ENCODE measurements at regions of chr15 and their contacts with region 1.

Region 1: DNA sequence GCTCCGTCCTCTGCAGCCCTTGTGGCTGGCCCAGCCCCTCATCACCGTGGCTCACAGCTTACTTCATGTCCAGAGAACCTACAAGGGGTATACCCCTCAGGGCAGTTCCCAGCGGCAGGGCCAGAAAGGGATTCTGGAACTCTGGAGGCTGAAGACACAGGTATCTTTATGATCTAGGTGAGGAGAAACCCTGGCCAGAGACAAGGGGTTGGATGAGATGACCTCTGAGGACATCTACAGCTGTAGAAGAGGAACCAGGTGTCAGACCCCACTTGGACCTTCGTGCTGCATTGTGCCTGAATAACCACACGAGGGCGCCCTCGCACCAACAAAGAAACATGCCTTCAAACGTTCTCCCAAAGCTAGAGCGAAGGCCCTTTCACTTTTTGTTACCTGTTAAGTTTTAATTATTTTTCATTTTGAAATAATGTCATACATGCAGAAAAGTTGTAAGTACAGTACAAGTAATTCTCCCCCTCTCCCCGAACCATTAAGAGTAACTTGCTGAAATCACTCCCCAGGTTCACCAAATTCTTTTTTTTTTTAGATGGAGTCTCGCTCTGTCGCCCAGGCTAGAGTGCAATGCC is 118.7 kb upstream of the SMAD3 start:
- DNase-seq: peak; percentile 70
- ATAC-seq: peak; percentile 79
- H3K4me3 ChIP-seq: no peak overlapping the region
- H3K27ac ChIP-seq: no peak overlapping the region
- H3K4me1 ChIP-seq: no peaks in the 10 kb centered on the region; the same call in none of the 2 replicates
- H3K27me3 ChIP-seq: no peaks in the 10 kb centered on the region
- CTCF ChIP-seq: peak; percentile 93
- POLR2A ChIP-seq: peak; percentile 48; the same call in 1 of the 2 replicates
- RAD21 ChIP-seq: peak; percentile 98

Region 2: GRCh38 chr15:66883322-66883911 is 63.3 kb before region 1 on chr15:
- CTCF ChIA-PET with region 1: no interaction called
- POLR2A ChIA-PET with region 1: no interaction called
- dilution Hi-C with region 1: no loop called
- in situ Hi-C with region 1: no loop called
- intact Hi-C with region 1: no loop called
- DNase-seq: peak; percentile 100
- ATAC-seq: peak; percentile 85
- H3K4me3 ChIP-seq: no peak overlapping the region
- H3K27ac ChIP-seq: peak overlapping the region; percentile 54
- H3K4me1 ChIP-seq: peaks cover 20% of the 10 kb centered on the region
- H3K27me3 ChIP-seq: no peaks in the 10 kb centered on the region
- CTCF ChIP-seq: 0 out of 2 replicates have a peak, but pooled peaks have one; percentile 0
- POLR2A ChIP-seq: no peak
- RAD21 ChIP-seq: no peak

Region 3: DNA sequence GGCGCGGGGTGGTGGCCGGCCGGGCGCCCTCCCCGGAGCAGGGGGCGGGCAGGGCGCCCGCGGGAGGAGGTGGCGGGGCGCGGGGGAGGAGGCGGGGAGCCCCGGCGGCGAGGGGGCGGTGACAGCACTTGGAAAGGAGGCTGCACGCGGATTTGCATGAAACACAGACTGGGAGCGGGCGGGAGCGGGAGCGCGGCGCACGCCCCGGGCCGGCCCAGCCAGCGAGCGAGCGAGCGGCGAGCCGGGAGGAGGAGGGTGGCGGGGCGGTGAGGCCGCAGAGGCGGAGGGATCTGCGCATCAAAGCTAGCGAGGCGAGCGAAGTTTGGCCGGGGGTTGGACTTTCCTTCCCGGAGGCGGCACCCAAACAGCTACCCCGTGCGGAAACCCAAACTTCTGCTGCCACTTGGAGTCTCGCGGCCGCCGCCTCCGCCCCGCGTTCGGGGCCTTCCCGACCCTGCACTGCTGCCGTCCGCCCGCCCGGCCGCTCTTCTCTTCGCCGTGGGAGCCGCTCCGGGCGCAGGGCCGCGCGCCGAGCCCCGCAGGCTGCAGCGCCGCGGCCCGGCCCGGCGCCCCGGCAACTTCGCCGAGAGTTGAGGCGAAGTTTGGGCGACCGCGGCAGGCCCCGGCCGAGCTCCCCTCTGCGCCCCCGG is 118.9 kb after region 1 on chr15 and contains the start of gene SMAD3:
- CTCF ChIA-PET with region 1: interaction called, 4 read pairs
- POLR2A ChIA-PET with region 1: no interaction called
- dilution Hi-C with region 1: no loop called
- in situ Hi-C with region 1: loop called (anchors 5 kb)
- intact Hi-C with region 1: loop called (anchors 1 kb)
- DNase-seq: peak; percentile 95
- ATAC-seq: peak; percentile 86
- H3K4me3 ChIP-seq: peak within 1 kb of the TSS; percentile 96
- H3K27ac ChIP-seq: peak within 1 kb of the TSS; percentile 92
- H3K4me1 ChIP-seq: peaks cover 12% of the 10 kb centered on the region
- H3K27me3 ChIP-seq: no peaks in the 10 kb centered on the region
- CTCF ChIP-seq: peak; percentile 3; the same call in 1 of the 2 replicates
- POLR2A ChIP-seq: peak; percentile 97
- RAD21 ChIP-seq: peak; percentile 48
- total RNA-seq, gene SMAD3: 71.0 and 71.1 TPM in 2 replicates

Region 4: DNA sequence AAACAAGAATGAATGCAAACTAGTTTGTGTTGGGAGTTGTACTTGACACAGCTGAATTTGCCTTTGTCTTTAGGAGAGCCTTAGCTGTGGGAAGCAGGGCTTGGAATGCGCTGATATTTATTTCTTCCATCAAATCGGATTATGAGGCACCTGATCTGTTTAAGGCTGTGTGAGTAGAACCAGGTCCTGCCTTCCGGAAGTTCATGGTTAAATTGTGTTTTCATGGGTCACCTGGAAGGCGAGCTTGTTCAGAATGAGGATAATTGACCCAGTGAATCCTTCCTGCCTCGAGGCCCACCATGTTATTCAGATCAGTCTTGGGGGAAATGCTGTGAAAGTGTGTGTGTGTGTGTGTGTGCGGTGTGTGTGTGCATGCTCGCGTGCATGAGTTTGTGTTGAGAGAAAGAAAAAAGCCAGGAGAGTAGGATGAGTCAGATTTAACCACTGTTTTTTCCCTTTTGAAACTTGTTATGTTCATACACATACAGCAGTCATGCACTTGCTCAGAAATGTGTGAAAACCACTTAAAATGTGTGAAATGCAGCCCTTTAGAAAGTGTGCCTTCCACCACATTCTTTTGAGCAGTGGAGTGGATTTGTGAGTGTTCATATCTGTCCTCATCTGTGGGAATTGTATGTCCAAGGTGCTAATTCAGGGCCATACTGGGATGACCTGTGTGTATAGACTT is 155.4 kb after region 1 on chr15:
- CTCF ChIA-PET with region 1: no interaction called
- POLR2A ChIA-PET with region 1: no interaction called
- dilution Hi-C with region 1: no loop called
- in situ Hi-C with region 1: no loop called
- intact Hi-C with region 1: no loop called
- DNase-seq: peak; percentile 87
- ATAC-seq: no peak
- H3K4me3 ChIP-seq: no peak overlapping the region
- H3K27ac ChIP-seq: peak overlapping the region; percentile 49
- H3K4me1 ChIP-seq: peaks cover 72% of the 10 kb centered on the region
- H3K27me3 ChIP-seq: no peaks in the 10 kb centered on the region
- CTCF ChIP-seq: no peak
- POLR2A ChIP-seq: no peak
- RAD21 ChIP-seq: no peak

Region 5: GRCh38 chr15:67165254-67166253 is 218.9 kb after region 1 on chr15:
- CTCF ChIA-PET with region 1: no interaction called
- POLR2A ChIA-PET with region 1: no interaction called
- dilution Hi-C with region 1: no loop called
- in situ Hi-C with region 1: no loop called
- intact Hi-C with region 1: no loop called
- DNase-seq: peak; percentile 70
- ATAC-seq: no peak
- H3K4me3 ChIP-seq: no peak overlapping the region
- H3K27ac ChIP-seq: peak overlapping the region; percentile 89
- H3K4me1 ChIP-seq: peaks cover 67% of the 10 kb centered on the region
- H3K27me3 ChIP-seq: no peaks in the 10 kb centered on the region
- CTCF ChIP-seq: no peak
- POLR2A ChIP-seq: no peak
- RAD21 ChIP-seq: no peak

Region 6: DNA sequence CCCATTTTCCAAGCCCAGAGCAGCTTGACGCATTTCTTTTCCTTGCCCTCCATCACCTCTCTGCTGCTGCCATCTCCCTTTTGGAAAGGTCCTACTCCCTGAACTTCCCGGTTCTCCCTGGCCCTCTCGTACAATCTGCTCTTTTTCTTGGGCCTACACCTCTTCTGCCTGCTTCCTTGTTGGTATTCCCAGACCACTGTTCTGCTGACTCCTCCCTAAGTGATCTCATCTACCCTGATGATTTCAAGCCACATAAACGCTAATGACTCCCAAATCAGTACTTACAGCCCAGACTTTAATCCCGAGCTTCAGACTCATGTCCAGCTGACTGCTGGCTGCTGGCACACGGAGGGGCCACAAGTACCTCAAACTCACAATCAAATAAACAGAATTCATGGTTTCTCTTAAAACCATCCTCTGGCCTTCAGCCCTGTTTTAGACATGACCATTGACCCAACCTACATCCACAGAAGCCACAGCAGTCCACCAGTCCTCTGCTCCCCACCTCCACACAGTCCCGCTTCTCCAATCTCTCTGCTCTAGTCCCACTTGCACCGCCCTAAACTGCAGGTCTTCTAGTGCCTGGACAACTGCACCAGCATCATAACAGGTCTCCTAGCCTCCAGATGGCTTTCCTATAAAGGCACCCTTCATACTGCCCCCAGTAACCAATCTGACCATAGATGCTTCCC is 250.1 kb after region 1 on chr15:
- CTCF ChIA-PET with region 1: no interaction called
- POLR2A ChIA-PET with region 1: interaction called, 4 read pairs
- dilution Hi-C with region 1: no loop called
- in situ Hi-C with region 1: loop called (anchors 10 kb)
- intact Hi-C with region 1: loop called (anchors 1 kb)
- DNase-seq: peak; percentile 93
- ATAC-seq: peak; percentile 44
- H3K4me3 ChIP-seq: no peak overlapping the region
- H3K27ac ChIP-seq: peak overlapping the region; percentile 72
- H3K4me1 ChIP-seq: peaks cover 41% of the 10 kb centered on the region
- H3K27me3 ChIP-seq: no peaks in the 10 kb centered on the region
- CTCF ChIP-seq: no peak
- POLR2A ChIP-seq: peak; percentile 56; the same call in 1 of the 2 replicates
- RAD21 ChIP-seq: no peak

Region 7: DNA sequence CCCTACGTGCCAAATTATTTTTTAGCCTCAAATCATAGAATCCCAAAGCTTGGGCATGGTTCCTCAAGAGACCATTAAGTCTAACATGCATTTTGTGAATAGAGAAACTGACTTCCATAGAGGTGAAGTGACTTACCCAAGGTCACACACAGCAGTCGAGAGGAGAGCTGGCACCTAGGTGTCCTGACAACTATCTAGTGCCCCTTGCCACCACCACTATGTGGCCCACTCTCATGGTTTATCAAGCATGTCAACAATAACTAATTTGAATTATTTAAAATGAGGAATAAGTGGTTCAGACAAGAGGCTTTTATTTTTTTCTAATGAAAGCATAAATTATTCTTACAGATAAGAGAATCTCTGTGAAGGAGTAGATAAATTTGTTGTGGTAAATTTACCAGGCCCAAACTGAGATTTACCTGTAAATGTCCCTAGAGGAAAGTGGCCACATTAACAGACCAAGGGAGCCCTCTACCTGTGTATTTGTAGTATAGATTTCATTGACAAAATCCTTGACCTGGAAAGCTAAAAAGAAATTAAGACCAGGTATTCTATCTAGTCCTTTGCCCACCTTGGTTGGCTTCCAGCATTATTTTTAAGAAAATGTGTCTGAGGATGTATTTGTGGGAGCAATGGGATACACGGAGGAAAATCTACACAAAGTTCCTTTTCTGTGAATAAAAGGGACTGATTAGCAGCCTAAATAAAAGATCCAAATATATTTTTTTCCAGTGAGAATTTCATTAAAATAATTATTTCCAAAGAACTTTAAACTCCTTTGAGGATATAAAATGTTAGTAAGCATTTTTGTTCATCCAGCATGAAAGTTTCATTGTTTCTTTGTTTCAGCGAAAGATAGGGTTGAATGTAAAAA is 357.1 kb after region 1 on chr15:
- CTCF ChIA-PET with region 1: interaction called, 9 read pairs
- POLR2A ChIA-PET with region 1: no interaction called
- dilution Hi-C with region 1: no loop called
- in situ Hi-C with region 1: loop called (anchors 5 kb)
- intact Hi-C with region 1: loop called (anchors 1 kb)
- DNase-seq: peak; percentile 55
- ATAC-seq: 0 out of 2 replicates have a peak, but pooled peaks have one; percentile 32
- H3K4me3 ChIP-seq: no peak overlapping the region
- H3K27ac ChIP-seq: no peak overlapping the region
- H3K4me1 ChIP-seq: peaks cover 2% of the 10 kb centered on the region; the same call in 1 of the 2 replicates
- H3K27me3 ChIP-seq: no peaks in the 10 kb centered on the region
- CTCF ChIP-seq: peak; percentile 59
- POLR2A ChIP-seq: no peak
- RAD21 ChIP-seq: peak; percentile 71

Region 8: DNA sequence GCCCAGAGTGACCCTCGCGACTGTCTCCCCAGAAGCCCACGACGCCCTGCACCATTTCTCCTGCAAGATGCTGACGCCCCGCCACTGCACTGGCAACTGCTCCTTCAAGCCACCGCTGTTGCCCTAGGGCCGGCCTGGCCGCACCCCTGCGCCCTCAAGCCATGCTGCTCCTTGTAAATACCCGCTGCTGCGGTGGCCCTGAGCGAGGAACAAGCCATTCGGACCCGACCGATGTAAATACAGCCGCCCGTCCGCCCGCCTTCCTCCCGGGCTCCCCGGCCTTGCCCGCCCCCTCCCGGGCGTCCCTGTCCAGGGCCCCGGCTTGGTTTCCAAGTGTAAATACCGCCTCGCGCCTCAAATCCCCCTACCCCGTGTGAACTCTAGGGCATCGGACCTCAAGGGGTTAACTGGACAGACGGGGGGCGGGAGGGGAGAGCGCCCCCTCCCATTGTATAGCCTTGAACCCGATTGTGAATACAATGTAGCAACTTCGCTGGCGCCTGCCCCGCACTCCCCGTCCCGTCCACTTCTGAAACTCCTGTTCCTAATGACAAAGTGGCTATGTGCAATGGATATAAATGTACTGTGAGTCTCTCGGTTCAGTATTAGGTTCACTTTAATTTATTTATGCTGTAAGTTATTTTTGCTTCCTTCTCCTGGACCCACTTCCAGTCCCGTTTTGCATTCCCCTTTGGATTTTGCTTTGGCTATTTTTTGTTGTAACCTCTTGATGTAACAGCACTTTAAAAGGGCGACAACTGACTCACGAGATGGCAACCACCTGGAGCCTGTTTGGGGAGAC is 887.2 kb after region 1 on chr15:
- CTCF ChIA-PET with region 1: no interaction called
- POLR2A ChIA-PET with region 1: no interaction called
- dilution Hi-C with region 1: no loop called
- in situ Hi-C with region 1: loop called (anchors 5 kb)
- intact Hi-C with region 1: loop called (anchors 2 kb)
- DNase-seq: no peak
- ATAC-seq: peak; percentile 69
- H3K4me3 ChIP-seq: peak overlapping the region; percentile 17; the same call in 1 of the 2 replicates
- H3K27ac ChIP-seq: no peak overlapping the region
- H3K4me1 ChIP-seq: no peaks in the 10 kb centered on the region
- H3K27me3 ChIP-seq: peaks cover 82% of the 10 kb centered on the region
- CTCF ChIP-seq: peak; percentile 55
- POLR2A ChIP-seq: no peak
- RAD21 ChIP-seq: peak; percentile 62

Measured in IMR-90 (cell line).